ENCODE measurements at regions of chr18 and their contacts with region 1.

Region 1: GRCh38 chr18:25435149-25435782 is 83.3 kb upstream of the ZNF521 start:
- DNase-seq: no peak
- H3K4me3 ChIP-seq: no peak overlapping the region
- H3K27ac ChIP-seq: no peak overlapping the region
- H3K4me1 ChIP-seq: no peaks in the 10 kb centered on the region
- H3K27me3 ChIP-seq: no peaks in the 10 kb centered on the region
- CTCF ChIP-seq: no peak
- EP300 ChIP-seq: no peak
- POLR2A ChIP-seq: no peak

Region 2: DNA sequence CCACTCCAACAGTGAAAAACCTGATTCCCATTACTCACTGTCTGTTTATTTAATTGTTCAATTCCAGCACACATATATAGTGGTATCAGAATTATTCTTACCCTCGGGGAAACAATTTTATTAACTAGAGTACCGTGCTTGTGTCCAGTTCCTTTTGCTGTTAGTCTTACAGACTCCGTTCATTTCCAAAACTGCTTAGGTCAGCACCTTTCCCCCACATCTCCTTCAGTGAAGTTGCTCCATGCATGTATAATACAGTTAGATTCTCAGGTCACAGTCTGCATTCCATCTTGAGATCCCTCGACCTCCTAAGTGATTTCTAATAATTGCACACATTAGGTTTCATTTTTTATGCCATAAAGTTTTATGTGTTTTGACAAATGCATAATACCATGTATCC is 27.0 kb before region 1 on chr18:
- in situ Hi-C with region 1: no loop called
- intact Hi-C with region 1: loop called (anchors 1 kb)
- DNase-seq: no peak
- H3K4me3 ChIP-seq: no peak overlapping the region
- H3K27ac ChIP-seq: no peak overlapping the region
- H3K4me1 ChIP-seq: no peaks in the 10 kb centered on the region
- H3K27me3 ChIP-seq: no peaks in the 10 kb centered on the region
- CTCF ChIP-seq: no peak
- EP300 ChIP-seq: no peak
- POLR2A ChIP-seq: no peak

Region 3: GRCh38 chr18:25827961-25828561 is 392.8 kb after region 1 on chr18:
- in situ Hi-C with region 1: no loop called
- intact Hi-C with region 1: no loop called
- DNase-seq: no peak
- H3K4me3 ChIP-seq: no peak overlapping the region
- H3K27ac ChIP-seq: no peak overlapping the region
- H3K4me1 ChIP-seq: no peaks in the 10 kb centered on the region
- H3K27me3 ChIP-seq: no peaks in the 10 kb centered on the region
- CTCF ChIP-seq: no peak
- EP300 ChIP-seq: no peak
- POLR2A ChIP-seq: no peak

Measured in transverse colon (tissue), 4 donors.